Mammary epithelial cell (primary cell): ENCODE measurements at regions of chr2 and their contacts with region 1.

Region 1: DNA sequence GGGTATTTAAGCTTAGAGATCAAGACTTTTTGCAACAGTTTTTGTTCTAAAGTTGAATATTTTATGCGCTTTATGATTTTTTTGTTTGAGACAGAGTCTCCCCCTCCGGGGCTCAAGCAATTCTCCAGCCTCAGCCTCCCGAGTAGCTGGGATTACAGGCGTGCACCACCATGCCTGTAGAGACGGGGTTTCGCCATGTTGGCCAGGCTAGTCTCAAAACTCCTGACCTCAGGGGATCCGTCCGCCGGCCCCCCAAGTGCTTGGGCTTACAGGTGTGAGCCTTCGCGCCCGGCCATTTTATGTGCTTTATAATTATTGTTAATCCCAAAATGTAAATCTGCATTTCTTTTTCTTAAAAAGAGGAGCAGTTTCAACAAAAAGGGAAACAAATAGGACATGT is 29.0 kb downstream of the TBR1 start:
- DNase-seq: no peak
- H3K4me3 ChIP-seq: no peak overlapping the region
- H3K27ac ChIP-seq: no peak overlapping the region
- H3K4me1 ChIP-seq: no peaks in the 10 kb centered on the region
- H3K27me3 ChIP-seq: peaks cover 3% of the 10 kb centered on the region
- CTCF ChIP-seq: no peak

Region 2: GRCh38 chr2:161415987-161416707 is 28.9 kb before region 1 on chr2 and contains the start of gene TBR1:
- CTCF ChIA-PET with region 1: interaction called, 13 read pairs
- dilution Hi-C with region 1: no loop called
- in situ Hi-C with region 1: no loop called
- intact Hi-C with region 1: no loop called
- DNase-seq: no peak
- H3K4me3 ChIP-seq: no peak within 1 kb of the TSS
- H3K27ac ChIP-seq: no peak within 1 kb of the TSS
- H3K4me1 ChIP-seq: peaks cover 21% of the 10 kb centered on the region
- H3K27me3 ChIP-seq: peaks cover 43% of the 10 kb centered on the region
- CTCF ChIP-seq: no peak
- total RNA-seq, gene TBR1: under 0.01 TPM in 1 of 2 donors, not detected in the other